PC-9 (cell line): ENCODE measurements at regions of chr1 and their contacts with region 1.

Region 1: DNA sequence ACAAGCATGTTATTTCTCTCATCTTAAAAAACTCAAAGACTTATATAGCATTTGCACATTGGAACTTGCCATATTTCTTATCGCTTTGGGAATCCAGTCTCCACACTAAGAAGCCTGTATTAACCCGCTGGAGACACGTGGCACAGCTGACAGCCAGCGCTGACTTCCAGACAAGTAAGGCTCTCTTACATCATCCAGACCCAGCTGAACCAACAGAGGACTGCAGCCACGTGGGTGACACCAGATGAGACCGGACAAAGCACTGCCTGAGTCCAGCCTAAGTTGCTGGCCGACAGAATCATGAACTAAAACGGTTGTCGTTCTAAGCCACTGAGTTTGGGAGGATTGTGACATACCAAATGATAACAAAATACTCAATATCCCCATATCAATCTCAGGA is 6.3 kb upstream of the CD247 start:
- DNase-seq: no peak
- H3K4me3 ChIP-seq: no peak overlapping the region
- H3K27ac ChIP-seq: no peak overlapping the region
- H3K4me1 ChIP-seq: no peaks in the 10 kb centered on the region
- H3K27me3 ChIP-seq: no peaks in the 10 kb centered on the region
- CTCF ChIP-seq: no peak

Region 2: GRCh38 chr1:167605576-167605975 is 80.9 kb after region 1 on chr1:
- CTCF ChIA-PET with region 1: interaction called, 11 read pairs
- POLR2A ChIA-PET with region 1: no interaction called
- intact Hi-C with region 1: no loop called
- DNase-seq: no peak
- H3K4me3 ChIP-seq: no peak overlapping the region
- H3K27ac ChIP-seq: no peak overlapping the region
- H3K4me1 ChIP-seq: peaks cover 18% of the 10 kb centered on the region
- H3K27me3 ChIP-seq: peaks cover 24% of the 10 kb centered on the region; the same call in 1 of the 2 replicates
- CTCF ChIP-seq: no peak